Posterior cingulate gyrus (tissue), 11 donors: ENCODE measurements at regions of chr9 and their contacts with region 1.

Region 1: GRCh38 chr9:105414947-105415661 is 32.7 kb upstream of the FSD1L start:
- DNase-seq: peak in 6 of 10 donors; percentile 16 to 84 (median 64)

Region 2: GRCh38 chr9:104780799-104781395 is 634.2 kb before region 1 on chr9:
- intact Hi-C with region 1: loop called (anchors 10 kb)
- DNase-seq: no peak

Region 3: DNA sequence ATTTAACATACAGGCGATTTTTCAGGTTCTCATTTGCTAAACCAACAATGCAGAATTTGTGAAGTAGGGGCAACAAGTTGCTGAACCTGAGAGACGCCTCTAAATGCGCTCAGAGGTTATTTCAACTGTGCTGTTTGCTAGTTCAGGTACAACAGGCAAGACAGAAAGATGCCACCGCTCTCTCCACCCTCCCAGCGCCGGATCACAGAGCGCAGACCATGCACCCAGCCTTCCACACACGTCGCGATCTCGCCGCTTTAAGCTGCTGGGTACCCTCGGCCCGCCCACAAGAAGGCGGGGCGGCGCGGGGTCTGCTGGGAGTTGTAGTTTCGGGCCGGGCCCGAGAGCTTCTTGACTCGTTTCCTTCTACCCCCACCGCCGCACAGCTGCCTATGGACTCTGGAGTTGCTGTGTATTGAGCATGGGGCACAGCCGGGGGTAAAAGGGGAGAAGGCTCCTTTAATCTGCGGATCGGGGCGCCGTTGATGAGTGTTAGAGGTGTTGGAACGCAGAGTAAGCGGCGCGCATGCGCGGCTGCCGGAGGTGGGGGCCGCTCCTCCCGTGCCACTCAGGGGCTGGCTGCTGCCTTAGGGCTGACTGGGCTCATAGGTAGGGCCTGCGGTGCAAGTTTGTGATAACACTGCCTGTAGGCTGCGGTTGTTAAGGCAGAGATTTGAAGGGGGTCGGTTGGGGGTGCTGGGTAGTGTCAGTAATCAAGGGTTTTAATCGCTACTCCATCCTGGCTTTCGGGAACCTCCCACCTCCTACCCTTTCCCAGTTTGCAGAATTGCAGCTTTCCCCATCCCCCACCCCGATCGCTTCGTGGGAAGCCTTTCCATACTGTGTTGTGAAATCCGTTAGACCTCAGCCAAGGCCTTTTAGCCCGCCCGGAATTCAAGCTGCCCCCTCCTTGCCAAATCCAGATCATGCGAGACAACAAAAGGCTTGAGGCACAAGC is 446.8 kb before region 1 on chr9:
- intact Hi-C with region 1: loop called (anchors 10 kb)
- DNase-seq: peak; percentile 82 to 98 (median 91)